ENCODE measurements at regions of chr9 and their contacts with region 1.

Region 1: DNA sequence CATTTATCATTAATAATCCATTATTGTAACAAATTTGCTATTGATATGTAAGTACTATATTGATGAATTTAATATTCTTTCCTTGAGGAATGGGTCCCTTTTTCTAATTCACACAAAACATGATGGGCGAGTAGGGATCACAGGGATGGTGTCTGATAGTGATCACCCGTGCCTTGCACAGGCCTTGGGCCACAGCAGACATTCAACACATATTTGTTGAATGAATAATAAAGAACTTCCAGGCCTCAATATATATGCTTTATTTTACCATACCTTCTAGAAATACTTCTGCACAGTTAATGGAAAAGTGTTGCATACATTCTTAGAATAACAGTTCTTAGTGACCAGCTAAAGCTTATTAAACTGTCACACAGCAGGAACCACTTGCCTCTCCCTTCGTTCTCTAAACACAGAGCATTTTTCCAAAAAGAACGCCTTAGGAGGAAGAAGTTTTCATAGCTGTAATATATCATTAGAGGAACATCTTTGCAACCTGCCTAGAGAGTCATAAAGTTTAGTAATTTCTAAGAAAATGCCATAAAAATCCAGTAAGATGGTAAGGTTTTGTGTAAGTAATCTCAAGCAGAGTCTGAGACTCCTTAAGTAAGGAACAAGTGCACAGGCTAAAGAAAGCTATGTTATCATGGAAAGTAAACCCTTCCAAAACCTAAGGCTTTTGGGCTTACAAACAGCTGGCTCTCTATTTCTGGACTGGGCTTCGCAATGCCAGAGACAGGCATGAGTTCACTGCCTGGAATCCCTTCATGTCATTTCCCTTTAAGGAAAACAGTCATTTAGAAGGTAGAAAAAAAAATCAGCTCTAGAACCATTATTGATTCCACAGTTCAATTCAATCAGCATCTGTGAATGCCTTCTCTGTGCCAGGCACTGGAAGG is 17.7 kb downstream of the TTLL11 start:
- DNase-seq: no peak

Region 2: GRCh38 chr9:120729791-120730241 is 1345.6 kb before region 1 on chr9:
- intact Hi-C with region 1: loop called in 1 of 2 experiments (anchors 5 kb)
- DNase-seq: no peak

Region 3: GRCh38 chr9:121895818-121896544 is 179.4 kb before region 1 on chr9:
- intact Hi-C with region 1: no loop called
- DNase-seq: no peak

Region 4: DNA sequence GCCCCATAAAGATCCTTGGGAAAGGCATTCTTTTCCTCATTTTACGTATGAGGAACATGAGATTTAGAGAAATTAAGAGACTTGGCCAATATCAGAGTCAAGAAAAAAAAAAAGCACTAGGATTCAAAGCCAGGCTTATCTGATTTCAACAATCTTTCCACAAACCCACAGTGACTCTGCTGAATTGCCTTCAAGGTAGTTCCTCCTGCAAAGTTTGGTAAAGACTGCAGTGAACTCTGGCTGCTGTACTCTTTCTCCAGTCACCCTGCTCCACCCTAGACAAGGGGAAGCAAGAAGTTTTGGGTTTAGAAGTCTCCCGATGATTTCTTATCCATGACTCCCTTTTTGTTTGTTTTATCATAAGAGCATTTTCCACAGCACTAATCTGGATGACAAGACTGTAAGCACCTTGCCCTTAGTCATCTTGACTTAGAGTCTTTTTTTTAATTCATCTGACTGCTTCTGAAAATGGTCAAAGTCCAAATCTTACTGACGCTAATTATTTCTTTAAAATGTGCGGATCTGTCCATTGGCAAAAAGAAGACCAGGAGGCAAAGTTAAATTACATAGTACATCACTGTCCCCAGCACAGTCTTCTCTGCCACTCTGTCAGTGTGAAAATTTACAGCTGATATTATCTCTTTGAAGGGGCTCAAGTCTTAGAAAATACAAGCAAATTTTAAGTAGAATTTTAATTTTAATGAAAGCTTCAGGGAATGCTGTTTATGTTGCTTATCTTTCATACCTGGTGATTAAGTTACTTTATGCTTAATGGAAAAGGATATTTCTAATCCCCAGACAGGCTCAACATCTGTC is 162.4 kb before region 1 on chr9:
- intact Hi-C with region 1: no loop called
- DNase-seq: no peak

Measured in posterior vena cava (tissue), 2 donors.